Mammary epithelial cell (primary cell): ENCODE measurements at regions of chrX and their contacts with region 1.

Region 1: GRCh38 chrX:19168609-19169008 is 46.3 kb upstream of the ADGRG2 start:
- DNase-seq: no peak
- H3K4me3 ChIP-seq: no peak overlapping the region
- H3K27ac ChIP-seq: no peak overlapping the region
- H3K4me1 ChIP-seq: no peaks in the 10 kb centered on the region
- H3K27me3 ChIP-seq: no peaks in the 10 kb centered on the region
- CTCF ChIP-seq: no peak

Region 2: DNA sequence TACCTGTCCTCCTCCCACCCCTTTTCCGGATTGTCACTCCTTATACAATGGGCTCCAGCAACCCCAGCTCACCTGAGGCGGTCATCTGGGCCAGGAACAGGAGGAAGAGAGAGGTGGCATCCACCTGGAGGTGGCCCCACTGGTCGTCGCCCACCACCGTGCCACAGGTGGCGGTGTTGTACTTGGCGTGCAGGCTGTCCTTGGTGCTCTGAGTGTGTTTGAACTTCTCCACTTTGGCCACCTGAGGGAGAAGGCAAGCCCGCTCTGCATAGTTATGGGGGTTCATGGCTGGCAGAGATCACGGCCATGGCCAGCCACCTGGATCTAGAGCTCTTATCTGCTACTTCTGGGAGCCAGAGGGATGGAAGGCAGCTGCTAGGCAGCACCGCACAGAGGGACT is 217.6 kb before region 1 on chrX:
- CTCF ChIA-PET with region 1: no interaction called
- dilution Hi-C with region 1: no loop called
- in situ Hi-C with region 1: no loop called
- intact Hi-C with region 1: no loop called
- DNase-seq: no peak
- H3K4me3 ChIP-seq: no peak overlapping the region
- H3K27ac ChIP-seq: no peak overlapping the region
- H3K4me1 ChIP-seq: no peaks in the 10 kb centered on the region
- H3K27me3 ChIP-seq: no peaks in the 10 kb centered on the region
- CTCF ChIP-seq: no peak

Region 3: GRCh38 chrX:19094654-19095053 is 74.0 kb before region 1 on chrX:
- CTCF ChIA-PET with region 1: no interaction called
- dilution Hi-C with region 1: no loop called
- in situ Hi-C with region 1: no loop called
- intact Hi-C with region 1: no loop called
- DNase-seq: no peak
- H3K4me3 ChIP-seq: no peak overlapping the region
- H3K27ac ChIP-seq: no peak overlapping the region
- H3K4me1 ChIP-seq: no peaks in the 10 kb centered on the region
- H3K27me3 ChIP-seq: no peaks in the 10 kb centered on the region
- CTCF ChIP-seq: no peak

Region 4: GRCh38 chrX:19204636-19205035 is 36.0 kb after region 1 on chrX:
- CTCF ChIA-PET with region 1: no interaction called
- dilution Hi-C with region 1: loop called (anchors 5 kb)
- in situ Hi-C with region 1: no loop called
- intact Hi-C with region 1: no loop called
- DNase-seq: no peak
- H3K4me3 ChIP-seq: no peak overlapping the region
- H3K27ac ChIP-seq: no peak overlapping the region
- H3K4me1 ChIP-seq: no peaks in the 10 kb centered on the region
- H3K27me3 ChIP-seq: peaks cover 3% of the 10 kb centered on the region
- CTCF ChIP-seq: no peak

Region 5: GRCh38 chrX:19514791-19515614 is 346.4 kb after region 1 on chrX and contains the start of gene MAP3K15:
- CTCF ChIA-PET with region 1: no interaction called
- dilution Hi-C with region 1: no loop called
- in situ Hi-C with region 1: no loop called
- intact Hi-C with region 1: no loop called
- DNase-seq: no peak
- H3K4me3 ChIP-seq: peak within 1 kb of the TSS in 1 of 3 experiments; percentile 24
- H3K27ac ChIP-seq: no peak within 1 kb of the TSS
- H3K4me1 ChIP-seq: no peaks in the 10 kb centered on the region
- H3K27me3 ChIP-seq: no peaks in the 10 kb centered on the region
- CTCF ChIP-seq: no peak
- total RNA-seq, gene MAP3K15: under 0.01 TPM in 1 of 2 donors, not detected in the other